CD8-positive, alpha-beta T cell (primary cell): ENCODE measurements at regions of chr12 and their contacts with region 1.

Region 1: DNA sequence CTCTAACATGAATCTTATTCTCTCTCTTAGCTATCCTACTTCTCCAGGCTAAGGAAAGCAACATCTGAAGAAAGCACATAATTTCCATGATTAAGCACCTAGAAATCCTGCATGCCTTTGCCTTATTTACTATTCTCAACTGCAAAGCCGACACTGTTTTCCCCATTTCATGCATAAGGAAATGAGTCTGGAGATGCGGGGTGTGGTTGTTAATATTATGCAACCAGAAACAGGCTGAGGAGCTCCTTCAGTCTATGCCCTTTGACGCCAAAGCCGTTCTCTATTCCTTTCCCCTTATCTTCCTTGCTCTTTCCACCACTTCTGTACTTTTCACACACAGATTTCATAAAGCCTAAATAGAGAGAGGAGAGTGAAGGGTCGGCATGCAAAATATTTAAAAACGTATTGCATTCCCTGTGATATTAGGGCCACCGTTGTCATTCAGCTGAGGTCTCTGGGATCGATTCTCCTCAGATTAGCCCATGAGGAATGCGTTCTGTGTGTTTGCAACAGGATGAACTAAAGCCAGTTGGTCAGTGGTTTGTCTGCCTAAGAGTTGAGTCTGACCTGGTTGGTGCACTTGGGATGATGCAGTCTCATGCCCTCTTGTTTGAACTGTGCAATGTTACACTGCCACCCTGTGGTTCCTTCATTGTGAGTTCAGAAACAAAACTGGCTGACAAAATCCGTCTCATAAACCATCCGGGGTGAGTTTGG is 53.1 kb upstream of the PLEKHG7 start:
- DNase-seq: peak; percentile 29 to 85 (median 63)
- ATAC-seq: peak; percentile 90
- H3K4me3 ChIP-seq: no peak overlapping the region
- H3K4me3 Mint-ChIP-seq: no peak overlapping the region
- H3K27ac ChIP-seq: no peak overlapping the region
- H3K27ac Mint-ChIP-seq: no peak overlapping the region
- H3K4me1 ChIP-seq: no peaks in the 10 kb centered on the region
- H3K4me1 Mint-ChIP-seq: peaks cover 6% of the 10 kb centered on the region
- H3K27me3 ChIP-seq: no peaks in the 10 kb centered on the region
- H3K27me3 Mint-ChIP-seq: no peaks in the 10 kb centered on the region
- CTCF ChIP-seq: peak; percentile 68

Region 2: GRCh38 chr12:90682398-90682797 is 1967.3 kb before region 1 on chr12:
- CTCF ChIA-PET with region 1: no interaction called
- POLR2A ChIA-PET with region 1: no interaction called
- intact Hi-C with region 1: no loop called
- DNase-seq: no peak
- ATAC-seq: no peak
- H3K4me3 ChIP-seq: no peak overlapping the region
- H3K4me3 Mint-ChIP-seq: no peak overlapping the region
- H3K27ac ChIP-seq: no peak overlapping the region
- H3K27ac Mint-ChIP-seq: no peak overlapping the region
- H3K4me1 ChIP-seq: no peaks in the 10 kb centered on the region
- H3K4me1 Mint-ChIP-seq: no peaks in the 10 kb centered on the region
- H3K27me3 ChIP-seq: no peaks in the 10 kb centered on the region
- H3K27me3 Mint-ChIP-seq: no peaks in the 10 kb centered on the region
- CTCF ChIP-seq: no peak

Region 3: GRCh38 chr12:90940872-90941499 is 1708.7 kb before region 1 on chr12:
- CTCF ChIA-PET with region 1: no interaction called
- POLR2A ChIA-PET with region 1: no interaction called
- intact Hi-C with region 1: loop called in 1 of 2 experiments (anchors 10 kb)
- DNase-seq: peak in 2 of 9 experiments; percentile 3 to 17
- ATAC-seq: no peak
- H3K4me3 ChIP-seq: no peak overlapping the region
- H3K4me3 Mint-ChIP-seq: no peak overlapping the region
- H3K27ac ChIP-seq: no peak overlapping the region
- H3K27ac Mint-ChIP-seq: no peak overlapping the region
- H3K4me1 ChIP-seq: no peaks in the 10 kb centered on the region
- H3K4me1 Mint-ChIP-seq: no peaks in the 10 kb centered on the region
- H3K27me3 ChIP-seq: no peaks in the 10 kb centered on the region
- H3K27me3 Mint-ChIP-seq: peaks cover 3% of the 10 kb centered on the region
- CTCF ChIP-seq: peak; percentile 56

Region 4: DNA sequence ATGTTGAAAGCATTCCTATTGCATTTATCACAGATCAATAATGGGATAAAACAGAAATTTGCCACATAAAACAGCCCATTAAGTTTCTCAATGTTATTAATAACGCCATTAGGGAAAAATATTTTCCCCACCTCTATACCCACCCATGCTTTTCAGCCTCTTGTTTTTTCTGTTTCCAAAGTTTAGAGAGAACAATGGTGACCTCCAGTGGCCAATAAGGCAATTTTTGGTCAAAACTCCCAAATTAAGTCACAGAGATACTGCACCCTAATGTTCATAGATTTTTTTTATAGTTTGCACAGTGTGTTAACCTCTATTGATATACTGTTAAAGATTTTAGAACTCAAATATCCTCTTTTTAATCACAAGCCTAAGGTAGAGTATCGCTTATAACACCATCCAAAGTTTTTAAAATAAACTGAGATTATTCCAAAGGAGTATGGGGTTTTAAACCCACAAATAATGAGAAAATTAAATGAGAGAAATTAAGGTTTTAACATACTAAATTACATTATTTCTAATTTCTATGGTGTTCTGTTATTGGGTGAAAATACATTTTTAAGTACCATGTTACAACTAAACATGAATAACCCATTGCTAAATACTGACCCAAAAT is 1282.3 kb before region 1 on chr12:
- CTCF ChIA-PET with region 1: interaction called, 15 read pairs
- POLR2A ChIA-PET with region 1: no interaction called
- intact Hi-C with region 1: loop called in 1 of 2 experiments (anchors 1 kb)
- DNase-seq: peak in 1 of 9 experiments; percentile 9
- ATAC-seq: no peak
- H3K4me3 ChIP-seq: no peak overlapping the region
- H3K4me3 Mint-ChIP-seq: no peak overlapping the region
- H3K27ac ChIP-seq: no peak overlapping the region
- H3K27ac Mint-ChIP-seq: no peak overlapping the region
- H3K4me1 ChIP-seq: no peaks in the 10 kb centered on the region
- H3K4me1 Mint-ChIP-seq: no peaks in the 10 kb centered on the region
- H3K27me3 ChIP-seq: no peaks in the 10 kb centered on the region
- H3K27me3 Mint-ChIP-seq: peaks cover 2% of the 10 kb centered on the region
- CTCF ChIP-seq: peak; percentile 49

Region 5: GRCh38 chr12:91577586-91578539 is 1071.8 kb before region 1 on chr12:
- CTCF ChIA-PET with region 1: interaction called, 8 read pairs
- POLR2A ChIA-PET with region 1: no interaction called
- intact Hi-C with region 1: loop called (anchors 5 kb)
- DNase-seq: peak in 2 of 9 experiments; percentile 37 to 59
- ATAC-seq: peak; percentile 85
- H3K4me3 ChIP-seq: peak overlapping the region; percentile 34 to 39
- H3K4me3 Mint-ChIP-seq: peak overlapping the region; percentile 77
- H3K27ac ChIP-seq: no peak overlapping the region
- H3K27ac Mint-ChIP-seq: peak overlapping the region; percentile 50
- H3K4me1 ChIP-seq: no peaks in the 10 kb centered on the region
- H3K4me1 Mint-ChIP-seq: peaks cover 14% of the 10 kb centered on the region
- H3K27me3 ChIP-seq: no peaks in the 10 kb centered on the region
- H3K27me3 Mint-ChIP-seq: no peaks in the 10 kb centered on the region
- CTCF ChIP-seq: peak; percentile 87

Region 6: GRCh38 chr12:92396647-92397252 is 252.9 kb before region 1 on chr12:
- CTCF ChIA-PET with region 1: no interaction called
- POLR2A ChIA-PET with region 1: no interaction called
- intact Hi-C with region 1: loop called in 1 of 2 experiments (anchors 5 kb)
- DNase-seq: no peak
- ATAC-seq: no peak
- H3K4me3 ChIP-seq: no peak overlapping the region
- H3K4me3 Mint-ChIP-seq: peak overlapping the region; percentile 4
- H3K27ac ChIP-seq: peak overlapping the region; percentile 2 to 46
- H3K27ac Mint-ChIP-seq: peak overlapping the region; percentile 95
- H3K4me1 ChIP-seq: peaks cover 88% of the 10 kb centered on the region
- H3K4me1 Mint-ChIP-seq: peaks cover 93% of the 10 kb centered on the region
- H3K27me3 ChIP-seq: no peaks in the 10 kb centered on the region
- H3K27me3 Mint-ChIP-seq: no peaks in the 10 kb centered on the region
- CTCF ChIP-seq: no peak

Region 7: GRCh38 chr12:92570056-92570753 is 79.5 kb before region 1 on chr12:
- CTCF ChIA-PET with region 1: interaction called, 19 read pairs
- POLR2A ChIA-PET with region 1: no interaction called
- intact Hi-C with region 1: loop called (anchors 1 kb)
- DNase-seq: peak in 7 of 9 experiments; percentile 25 to 83 (median 45)
- ATAC-seq: peak; percentile 93
- H3K4me3 ChIP-seq: peak overlapping the region in 1 of 2 experiments; percentile 30
- H3K4me3 Mint-ChIP-seq: no peak overlapping the region
- H3K27ac ChIP-seq: no peak overlapping the region
- H3K27ac Mint-ChIP-seq: no peak overlapping the region
- H3K4me1 ChIP-seq: peaks cover 22% of the 10 kb centered on the region
- H3K4me1 Mint-ChIP-seq: peaks cover 6% of the 10 kb centered on the region
- H3K27me3 ChIP-seq: no peaks in the 10 kb centered on the region
- H3K27me3 Mint-ChIP-seq: no peaks in the 10 kb centered on the region
- CTCF ChIP-seq: peak; percentile 98

Region 8: GRCh38 chr12:92844151-92844763 is 194.6 kb after region 1 on chr12:
- CTCF ChIA-PET with region 1: no interaction called
- POLR2A ChIA-PET with region 1: no interaction called
- intact Hi-C with region 1: no loop called
- DNase-seq: no peak
- ATAC-seq: no peak
- H3K4me3 ChIP-seq: no peak overlapping the region
- H3K4me3 Mint-ChIP-seq: no peak overlapping the region
- H3K27ac ChIP-seq: no peak overlapping the region
- H3K27ac Mint-ChIP-seq: no peak overlapping the region
- H3K4me1 ChIP-seq: no peaks in the 10 kb centered on the region
- H3K4me1 Mint-ChIP-seq: no peaks in the 10 kb centered on the region
- H3K27me3 ChIP-seq: no peaks in the 10 kb centered on the region
- H3K27me3 Mint-ChIP-seq: no peaks in the 10 kb centered on the region
- CTCF ChIP-seq: no peak